CD4-positive, alpha-beta memory T cell (primary cell): ENCODE measurements at regions of chr16 and their contacts with region 1.

Region 1: DNA sequence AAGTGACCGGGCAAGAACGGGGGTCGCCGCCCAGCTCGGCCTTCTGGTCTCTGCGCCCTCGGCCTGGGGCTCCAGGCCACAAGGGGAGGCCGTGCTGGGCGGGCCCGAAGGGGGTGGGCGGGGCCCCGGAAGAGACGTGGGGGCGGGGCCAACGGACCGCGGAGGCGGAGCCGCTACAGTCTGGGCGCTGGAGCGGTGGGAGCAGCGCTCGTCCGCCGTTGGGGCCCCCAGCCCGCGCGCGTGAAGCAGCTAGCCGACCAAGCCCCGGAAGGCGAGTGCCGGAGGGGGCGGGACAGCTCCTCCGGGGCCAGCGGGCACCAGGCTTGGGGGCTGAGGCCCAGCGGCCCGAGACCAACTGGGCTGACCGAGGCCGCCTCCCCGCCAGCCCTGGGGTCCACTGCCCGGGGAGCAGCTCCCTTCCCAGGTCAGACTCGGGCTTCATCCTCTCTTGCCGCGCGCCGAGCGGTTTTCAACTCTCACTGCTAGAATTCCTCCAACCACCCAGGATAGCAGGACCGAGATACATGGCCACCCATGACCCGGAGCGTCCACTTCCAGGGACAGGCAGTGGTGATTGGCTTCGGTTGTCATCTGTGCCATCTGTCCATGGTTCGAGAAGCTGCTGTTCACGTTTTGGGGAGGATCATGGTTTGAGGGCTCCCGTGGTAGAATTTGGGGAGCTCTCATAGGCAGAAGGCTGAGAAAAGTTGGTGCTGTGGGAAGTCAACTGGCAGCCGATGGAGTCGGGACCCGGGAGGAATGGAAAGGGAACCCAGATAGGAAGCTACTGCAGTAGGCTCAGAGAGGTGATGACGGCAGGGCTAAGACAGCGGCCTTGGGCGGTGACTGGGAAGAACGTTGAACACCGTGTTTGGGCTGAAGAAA is 44.6 kb upstream of the LCMT1 start:
- DNase-seq: peak; percentile 78 to 84 (median 79)
- H3K4me3 ChIP-seq: peak overlapping the region; percentile 70 to 73
- H3K4me3 Mint-ChIP-seq: peak overlapping the region; percentile 87 to 95 (median 92)
- H3K27ac ChIP-seq: peak overlapping the region; percentile 73
- H3K27ac Mint-ChIP-seq: peak overlapping the region; percentile 88 to 98 (median 94)
- H3K4me1 ChIP-seq: peaks cover 42% of the 10 kb centered on the region
- H3K4me1 Mint-ChIP-seq: peaks cover 25 to 41% (median 33%) of the 10 kb centered on the region in 4 donors
- H3K27me3 ChIP-seq: no peaks in the 10 kb centered on the region
- H3K27me3 Mint-ChIP-seq: no peaks in the 10 kb centered on the region

Region 2: GRCh38 chr16:24993722-24994686 is 73.0 kb before region 1 on chr16:
- CTCF ChIA-PET with region 1: no interaction called
- POLR2A ChIA-PET with region 1: no interaction called
- intact Hi-C with region 1: no loop called
- DNase-seq: no peak
- H3K4me3 ChIP-seq: no peak overlapping the region
- H3K4me3 Mint-ChIP-seq: no peak overlapping the region
- H3K27ac ChIP-seq: no peak overlapping the region
- H3K27ac Mint-ChIP-seq: peak overlapping the region in 2 of 7 donors; percentile 47 to 53
- H3K4me1 ChIP-seq: peaks cover 23% of the 10 kb centered on the region
- H3K4me1 Mint-ChIP-seq: peaks cover 49 to 80% (median 64%) of the 10 kb centered on the region in 4 donors
- H3K27me3 ChIP-seq: no peaks in the 10 kb centered on the region
- H3K27me3 Mint-ChIP-seq: no peaks in the 10 kb centered on the region

Region 3: GRCh38 chr16:25014500-25015147 is 52.4 kb before region 1 on chr16:
- CTCF ChIA-PET with region 1: no interaction called
- POLR2A ChIA-PET with region 1: interaction called, 10 read pairs
- intact Hi-C with region 1: loop called (anchors 5 kb)
- DNase-seq: peak in 4 of 5 donors; percentile 15 to 48 (median 26)
- H3K4me3 ChIP-seq: peak overlapping the region; percentile 57 to 71
- H3K4me3 Mint-ChIP-seq: peak overlapping the region; percentile 88 to 99 (median 97)
- H3K27ac ChIP-seq: peak overlapping the region; percentile 89
- H3K27ac Mint-ChIP-seq: peak overlapping the region; percentile 92 to 99 (median 97)
- H3K4me1 ChIP-seq: peaks cover 72% of the 10 kb centered on the region
- H3K4me1 Mint-ChIP-seq: peaks cover 58 to 85% (median 73%) of the 10 kb centered on the region in 4 donors
- H3K27me3 ChIP-seq: no peaks in the 10 kb centered on the region
- H3K27me3 Mint-ChIP-seq: no peaks in the 10 kb centered on the region

Region 4: DNA sequence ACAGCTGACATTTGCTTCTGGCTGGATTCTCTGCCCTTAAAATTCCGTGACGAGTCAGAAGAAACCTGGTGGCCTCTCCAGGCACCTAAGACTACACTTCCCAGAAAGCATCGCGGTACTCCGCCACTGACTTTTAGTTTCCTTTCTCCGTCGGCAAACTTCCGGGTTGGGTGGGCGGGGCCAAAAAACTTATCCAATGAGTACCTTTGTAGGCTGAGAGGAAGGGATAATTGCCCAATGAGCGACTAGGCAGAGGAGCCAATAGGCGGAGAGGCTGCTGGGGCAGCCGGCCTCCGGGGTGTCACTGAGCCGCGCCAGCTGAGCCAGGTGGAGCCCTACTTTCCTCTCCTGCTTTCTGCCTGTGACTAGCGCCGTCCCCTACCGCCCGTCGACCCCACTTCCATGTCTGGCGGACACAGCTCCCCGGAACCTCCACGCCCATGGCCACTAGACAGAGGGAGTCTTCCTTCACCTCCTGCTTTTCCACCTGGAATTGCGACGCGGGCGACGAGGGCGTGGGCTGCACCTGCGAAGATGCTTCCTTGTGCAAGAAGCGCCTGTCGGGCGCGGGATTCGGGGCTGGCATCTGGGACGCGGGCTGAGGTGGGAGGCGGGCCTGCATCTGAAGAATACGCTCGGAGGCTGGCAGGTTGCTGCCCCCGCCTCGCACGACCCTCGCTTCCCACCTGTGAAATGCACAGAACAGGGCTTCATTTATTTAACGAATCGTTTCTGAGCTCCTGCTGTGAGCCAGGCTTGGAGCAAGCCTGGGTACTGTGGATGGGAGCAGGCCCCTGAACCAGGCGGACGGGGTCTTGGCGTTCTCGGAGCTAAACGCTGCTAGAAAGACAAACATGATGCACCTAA is 35.3 kb before region 1 on chr16:
- CTCF ChIA-PET with region 1: no interaction called
- POLR2A ChIA-PET with region 1: interaction called, 6 read pairs
- intact Hi-C with region 1: loop called (anchors 5 kb)
- DNase-seq: peak; percentile 90 to 96 (median 94)
- H3K4me3 ChIP-seq: peak overlapping the region; percentile 26 to 75
- H3K4me3 Mint-ChIP-seq: peak overlapping the region; percentile 91 to 98 (median 96)
- H3K27ac ChIP-seq: peak overlapping the region; percentile 70
- H3K27ac Mint-ChIP-seq: peak overlapping the region; percentile 85 to 97 (median 96)
- H3K4me1 ChIP-seq: peaks cover 17% of the 10 kb centered on the region
- H3K4me1 Mint-ChIP-seq: peaks cover 23 to 43% (median 34%) of the 10 kb centered on the region in 4 donors
- H3K27me3 ChIP-seq: no peaks in the 10 kb centered on the region
- H3K27me3 Mint-ChIP-seq: no peaks in the 10 kb centered on the region

Region 5: DNA sequence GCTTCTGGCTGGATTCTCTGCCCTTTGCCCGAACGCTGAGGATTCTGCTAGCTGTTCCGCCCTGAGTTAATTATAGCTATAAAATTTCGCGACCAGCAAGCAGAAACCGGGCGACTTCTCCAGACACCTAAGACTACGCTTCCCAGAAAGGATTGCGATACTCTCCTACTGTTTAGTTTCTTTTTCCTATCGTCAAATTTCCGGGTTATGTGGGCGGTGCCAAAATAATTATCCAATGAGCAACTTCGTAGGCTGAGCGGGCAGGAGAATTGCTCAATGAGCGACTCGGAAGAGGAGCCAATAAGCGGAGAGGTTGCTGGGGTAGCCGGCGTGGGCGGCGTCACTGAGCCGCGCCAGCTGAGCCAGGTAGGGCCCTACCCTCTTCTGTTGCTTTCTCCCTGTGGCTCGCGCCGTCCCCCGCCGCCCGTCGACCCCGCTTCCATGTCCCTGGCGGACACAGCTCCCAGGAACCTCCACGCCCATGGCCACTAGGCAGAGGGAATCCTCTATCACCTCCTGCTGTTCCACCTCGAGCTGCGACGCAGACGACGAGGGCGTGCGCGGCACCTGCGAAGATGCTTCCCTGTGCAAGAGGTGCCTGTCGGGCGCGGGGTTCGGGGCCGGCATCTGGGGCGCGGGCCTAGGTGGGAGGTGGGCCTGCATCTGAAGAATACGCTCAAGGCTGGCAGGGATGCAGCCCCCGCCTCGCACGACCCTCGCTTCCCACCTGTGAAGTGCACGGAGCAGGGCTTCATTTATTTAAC is 44.6 kb after region 1 on chr16 and contains the start of gene LCMT1:
- CTCF ChIA-PET with region 1: interaction called, 127 read pairs
- POLR2A ChIA-PET with region 1: interaction called, 69 read pairs
- intact Hi-C with region 1: loop called (anchors 1 kb)
- DNase-seq: peak; percentile 92 to 97 (median 94)
- H3K4me3 ChIP-seq: peak within 1 kb of the TSS; percentile 71 to 79
- H3K4me3 Mint-ChIP-seq: peak within 1 kb of the TSS; percentile 94 to 99 (median 96)
- H3K27ac ChIP-seq: peak within 1 kb of the TSS; percentile 64
- H3K27ac Mint-ChIP-seq: peak within 1 kb of the TSS; percentile 65 to 97 (median 96)
- H3K4me1 ChIP-seq: peaks cover 50% of the 10 kb centered on the region
- H3K4me1 Mint-ChIP-seq: peaks cover 43 to 66% (median 53%) of the 10 kb centered on the region in 4 donors
- H3K27me3 ChIP-seq: no peaks in the 10 kb centered on the region
- H3K27me3 Mint-ChIP-seq: no peaks in the 10 kb centered on the region
- total RNA-seq, gene LCMT1: 37.0 to 37.9 TPM

Region 6: GRCh38 chr16:25121824-25122600 is 55.0 kb after region 1 on chr16:
- CTCF ChIA-PET with region 1: no interaction called
- POLR2A ChIA-PET with region 1: no interaction called
- intact Hi-C with region 1: no loop called
- DNase-seq: no peak
- H3K4me3 ChIP-seq: no peak overlapping the region
- H3K4me3 Mint-ChIP-seq: no peak overlapping the region
- H3K27ac ChIP-seq: no peak overlapping the region
- H3K27ac Mint-ChIP-seq: peak overlapping the region in 4 of 7 donors; percentile 42 to 62 (median 61)
- H3K4me1 ChIP-seq: peaks cover 14% of the 10 kb centered on the region
- H3K4me1 Mint-ChIP-seq: peaks cover 39 to 71% (median 54%) of the 10 kb centered on the region in 4 donors
- H3K27me3 ChIP-seq: no peaks in the 10 kb centered on the region
- H3K27me3 Mint-ChIP-seq: no peaks in the 10 kb centered on the region

Region 7: DNA sequence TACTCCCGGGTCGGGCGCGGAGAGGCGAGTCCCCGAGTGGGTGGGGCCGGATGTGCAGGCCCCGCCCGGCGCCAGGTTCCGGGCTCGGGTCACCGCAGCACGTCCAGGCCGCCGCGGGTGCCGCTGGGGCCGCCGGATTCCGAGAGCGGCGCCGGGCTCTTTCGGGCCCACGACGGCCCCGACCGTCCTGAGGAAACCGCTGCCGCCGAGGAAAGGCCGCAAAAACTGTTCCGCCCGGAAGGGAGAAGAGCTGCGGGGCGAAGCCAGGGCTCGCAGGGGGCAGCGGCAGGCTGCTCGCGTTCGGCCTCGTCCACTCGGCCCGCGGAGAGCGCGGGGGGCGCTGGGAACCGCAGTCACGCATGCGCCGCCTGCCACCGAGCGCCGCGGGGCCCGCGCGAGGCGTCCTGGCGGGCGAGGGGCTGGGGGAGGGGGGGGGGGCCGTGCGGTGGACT is 190.5 kb after region 1 on chr16 and contains the start of gene ZKSCAN2:
- CTCF ChIA-PET with region 1: no interaction called
- POLR2A ChIA-PET with region 1: no interaction called
- intact Hi-C with region 1: loop called (anchors 10 kb)
- DNase-seq: peak; percentile 76 to 83 (median 80)
- H3K4me3 ChIP-seq: peak within 1 kb of the TSS; percentile 80 to 84
- H3K4me3 Mint-ChIP-seq: peak within 1 kb of the TSS; percentile 93 to 98 (median 96)
- H3K27ac ChIP-seq: peak within 1 kb of the TSS; percentile 84
- H3K27ac Mint-ChIP-seq: peak within 1 kb of the TSS; percentile 96 to 98 (median 97)
- H3K4me1 ChIP-seq: peaks cover 44% of the 10 kb centered on the region
- H3K4me1 Mint-ChIP-seq: peaks cover 41 to 68% (median 55%) of the 10 kb centered on the region in 4 donors
- H3K27me3 ChIP-seq: no peaks in the 10 kb centered on the region
- H3K27me3 Mint-ChIP-seq: no peaks in the 10 kb centered on the region
- total RNA-seq, gene ZKSCAN2: 3.6 to 4.1 TPM